Transverse colon (tissue), 4 donors: ENCODE measurements at regions of chr14 and their contacts with region 1.

Region 1: GRCh38 chr14:64540208-64541157 is at the start of gene HSPA2:
- DNase-seq: peak; percentile 99
- H3K4me3 ChIP-seq: peak within 1 kb of the TSS; percentile 24 to 70 (median 46)
- H3K27ac ChIP-seq: peak within 1 kb of the TSS; percentile 90 to 97 (median 95)
- H3K4me1 ChIP-seq: peaks cover 0 to 18% (median 9%) of the 10 kb centered on the region in 4 donors
- H3K27me3 ChIP-seq: peaks cover 12% of the 10 kb centered on the region
- CTCF ChIP-seq: peak; percentile 68 to 98 (median 82)
- EP300 ChIP-seq: no peak
- POLR2A ChIP-seq: peak; percentile 98
- total RNA-seq, gene HSPA2: 28.1 to 61.5 (median 42.1) TPM

Region 2: GRCh38 chr14:64636208-64636979 is 95.9 kb after region 1 on chr14:
- in situ Hi-C with region 1: loop called (anchors 5 to 25 kb)
- intact Hi-C with region 1: loop called (anchors 2 kb)
- DNase-seq: peak; percentile 85
- H3K4me3 ChIP-seq: no peak overlapping the region
- H3K27ac ChIP-seq: peak overlapping the region; percentile 35 to 54 (median 42)
- H3K4me1 ChIP-seq: peaks cover 9 to 33% (median 25%) of the 10 kb centered on the region in 4 donors
- H3K27me3 ChIP-seq: no peaks in the 10 kb centered on the region
- CTCF ChIP-seq: peak; percentile 89 to 96 (median 93)
- EP300 ChIP-seq: no peak
- POLR2A ChIP-seq: no peak

Region 3: GRCh38 chr14:64645220-64645892 is 104.9 kb after region 1 on chr14:
- in situ Hi-C with region 1: loop called in 2 of 4 experiments (anchors 10 to 25 kb)
- intact Hi-C with region 1: no loop called
- DNase-seq: no peak
- H3K4me3 ChIP-seq: no peak overlapping the region
- H3K27ac ChIP-seq: peak overlapping the region; percentile 72 to 83 (median 78)
- H3K4me1 ChIP-seq: peaks cover 0 to 15% (median 6%) of the 10 kb centered on the region in 4 donors
- H3K27me3 ChIP-seq: no peaks in the 10 kb centered on the region
- CTCF ChIP-seq: no peak
- EP300 ChIP-seq: peak; percentile 85
- POLR2A ChIP-seq: no peak

Region 4: GRCh38 chr14:64764641-64765520 is 224.4 kb after region 1 on chr14:
- in situ Hi-C with region 1: loop called in 1 of 4 experiments (anchors 25 kb)
- intact Hi-C with region 1: no loop called
- DNase-seq: peak; percentile 79
- H3K4me3 ChIP-seq: peak overlapping the region in 2 of 4 donors; percentile 25 to 39
- H3K27ac ChIP-seq: peak overlapping the region in 3 of 4 donors; percentile 0 to 44 (median 23)
- H3K4me1 ChIP-seq: peaks cover 19 to 37% (median 26%) of the 10 kb centered on the region in 4 donors
- H3K27me3 ChIP-seq: no peaks in the 10 kb centered on the region
- CTCF ChIP-seq: peak; percentile 90 to 96 (median 92)
- EP300 ChIP-seq: no peak
- POLR2A ChIP-seq: no peak

Region 5: DNA sequence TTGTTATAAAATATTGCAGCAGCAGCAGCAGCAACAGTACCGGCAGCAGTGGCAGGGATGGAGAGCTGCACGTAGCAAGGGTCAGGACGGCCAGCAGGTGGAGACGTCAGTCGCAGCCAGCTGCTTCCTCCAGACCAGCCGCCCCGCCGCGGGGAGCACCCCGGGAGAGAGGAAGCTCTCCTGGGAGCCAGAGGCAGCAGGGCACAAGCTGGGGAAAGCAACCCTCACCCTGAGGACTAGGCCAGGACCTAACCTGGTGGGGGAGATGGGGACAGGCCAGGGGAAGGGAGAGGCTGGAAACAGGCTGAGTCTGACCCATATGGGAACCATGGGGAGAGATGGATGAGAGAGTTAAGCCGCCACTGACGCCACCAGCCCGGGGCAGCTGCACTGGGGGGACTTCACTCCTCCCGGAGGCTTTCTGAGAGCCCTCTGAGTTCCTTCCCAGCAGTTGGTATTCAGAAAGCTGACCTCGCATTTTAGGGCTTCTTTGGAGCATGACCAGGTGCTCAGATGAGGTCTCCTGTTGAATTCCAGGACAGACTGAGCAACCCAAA is 282.9 kb after region 1 on chr14:
- in situ Hi-C with region 1: no loop called
- intact Hi-C with region 1: loop called (anchors 2 kb)
- DNase-seq: peak; percentile 78
- H3K4me3 ChIP-seq: no peak overlapping the region
- H3K27ac ChIP-seq: no peak overlapping the region
- H3K4me1 ChIP-seq: peaks cover 3 to 4% (median 4%) of the 10 kb centered on the region in 4 donors
- H3K27me3 ChIP-seq: no peaks in the 10 kb centered on the region
- CTCF ChIP-seq: peak; percentile 75 to 85 (median 83)
- EP300 ChIP-seq: no peak
- POLR2A ChIP-seq: no peak